Naive thymus-derived CD4-positive, alpha-beta T cell (primary cell): ENCODE measurements at regions of chr10 and their contacts with region 1.

Region 1: GRCh38 chr10:56279270-56279669 is 81.8 kb downstream of the ZWINT start:
- DNase-seq: no peak
- ATAC-seq: no peak
- H3K4me3 ChIP-seq: no peak overlapping the region
- H3K4me3 Mint-ChIP-seq: no peak overlapping the region
- H3K27ac ChIP-seq: no peak overlapping the region
- H3K27ac Mint-ChIP-seq: no peak overlapping the region
- H3K4me1 ChIP-seq: no peaks in the 10 kb centered on the region
- H3K4me1 Mint-ChIP-seq: peaks cover 0 to 1% (median 0%) of the 10 kb centered on the region in 7 donors
- H3K27me3 ChIP-seq: no peaks in the 10 kb centered on the region
- H3K27me3 Mint-ChIP-seq: no peaks in the 10 kb centered on the region

Region 2: DNA sequence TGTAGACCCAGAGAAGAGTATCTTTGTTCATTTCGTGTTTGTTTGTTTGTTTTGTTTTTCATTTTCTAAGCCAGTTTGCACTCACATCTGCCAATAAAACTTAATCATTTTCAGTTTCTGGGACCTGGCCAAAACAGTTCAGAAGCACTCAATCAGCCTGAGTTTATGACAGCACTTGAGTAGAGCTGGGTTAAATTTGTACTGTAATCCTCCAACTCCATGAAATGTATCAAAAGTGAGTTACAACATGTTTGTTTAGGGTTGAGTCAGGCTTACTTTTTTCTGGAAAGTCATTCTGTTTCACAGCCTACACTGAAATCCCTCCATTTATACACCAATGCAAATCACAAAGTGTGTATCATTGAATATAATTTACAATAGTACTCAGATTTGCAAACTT is 10.1 kb before region 1 on chr10:
- CTCF ChIA-PET with region 1: no interaction called
- POLR2A ChIA-PET with region 1: no interaction called
- intact Hi-C with region 1: loop called in 1 of 2 experiments (anchors 1 kb)
- DNase-seq: no peak
- ATAC-seq: no peak
- H3K4me3 ChIP-seq: no peak overlapping the region
- H3K4me3 Mint-ChIP-seq: no peak overlapping the region
- H3K27ac ChIP-seq: no peak overlapping the region
- H3K27ac Mint-ChIP-seq: no peak overlapping the region
- H3K4me1 ChIP-seq: no peaks in the 10 kb centered on the region
- H3K4me1 Mint-ChIP-seq: no peaks in the 10 kb centered on the region
- H3K27me3 ChIP-seq: no peaks in the 10 kb centered on the region
- H3K27me3 Mint-ChIP-seq: no peaks in the 10 kb centered on the region